Activated CD8-positive, alpha-beta T cell treated with anti-CD3 and anti-CD28 coated beads for 36 hours (primary cell): ENCODE measurements at regions of chr11 and their contacts with region 1.

Region 1: GRCh38 chr11:59158206-59159068 is 13.5 kb upstream of the DTX4 start:
- DNase-seq: peak; percentile 78
- ATAC-seq: peak; percentile 97
- H3K4me3 Mint-ChIP-seq: no peak overlapping the region
- H3K27ac Mint-ChIP-seq: no peak overlapping the region
- H3K4me1 Mint-ChIP-seq: peaks cover 4% of the 10 kb centered on the region
- H3K27me3 Mint-ChIP-seq: peaks cover 10% of the 10 kb centered on the region
- CTCF ChIP-seq: peak; percentile 85

Region 2: DNA sequence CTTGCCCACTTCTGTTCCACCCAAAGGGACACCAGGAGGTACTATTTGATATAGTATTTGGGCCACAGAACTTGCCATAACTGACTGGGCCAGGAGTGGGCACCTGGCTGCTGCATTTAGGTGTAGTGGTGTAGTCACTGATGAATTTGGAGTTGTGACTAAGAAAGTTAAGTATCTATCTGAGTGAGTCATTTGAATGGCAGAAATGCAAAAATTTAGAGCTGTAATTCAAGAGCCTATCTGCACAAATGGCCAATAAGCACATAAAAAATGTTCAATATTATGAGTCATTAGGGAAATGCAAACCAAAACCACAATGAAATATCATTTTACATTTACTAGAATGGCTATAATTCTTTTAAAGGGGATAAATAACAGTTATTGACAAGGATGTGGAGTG is 328.7 kb before region 1 on chr11:
- CTCF ChIA-PET with region 1: no interaction called
- POLR2A ChIA-PET with region 1: no interaction called
- intact Hi-C with region 1: no loop called
- DNase-seq: peak; percentile 1
- ATAC-seq: peak; percentile 53
- H3K4me3 Mint-ChIP-seq: no peak overlapping the region
- H3K27ac Mint-ChIP-seq: no peak overlapping the region
- H3K4me1 Mint-ChIP-seq: no peaks in the 10 kb centered on the region
- H3K27me3 Mint-ChIP-seq: peaks cover 16% of the 10 kb centered on the region
- CTCF ChIP-seq: no peak

Region 3: GRCh38 chr11:58938398-58938797 is 220.0 kb before region 1 on chr11:
- CTCF ChIA-PET with region 1: no interaction called
- POLR2A ChIA-PET with region 1: no interaction called
- intact Hi-C with region 1: no loop called
- DNase-seq: no peak
- ATAC-seq: no peak
- H3K4me3 Mint-ChIP-seq: no peak overlapping the region
- H3K27ac Mint-ChIP-seq: no peak overlapping the region
- H3K4me1 Mint-ChIP-seq: no peaks in the 10 kb centered on the region
- H3K27me3 Mint-ChIP-seq: peaks cover 7% of the 10 kb centered on the region
- CTCF ChIP-seq: no peak

Region 4: GRCh38 chr11:59062602-59063529 is 95.6 kb before region 1 on chr11:
- CTCF ChIA-PET with region 1: interaction called, 29 read pairs
- POLR2A ChIA-PET with region 1: no interaction called
- intact Hi-C with region 1: no loop called
- DNase-seq: no peak
- ATAC-seq: no peak
- H3K4me3 Mint-ChIP-seq: no peak overlapping the region
- H3K27ac Mint-ChIP-seq: no peak overlapping the region
- H3K4me1 Mint-ChIP-seq: peaks cover 3% of the 10 kb centered on the region
- H3K27me3 Mint-ChIP-seq: peaks cover 36% of the 10 kb centered on the region
- CTCF ChIP-seq: no peak

Region 5: GRCh38 chr11:59106363-59107336 is 51.8 kb before region 1 on chr11 and contains the start of gene FAM111B:
- CTCF ChIA-PET with region 1: interaction called, 27 read pairs
- POLR2A ChIA-PET with region 1: interaction called, 5 read pairs
- intact Hi-C with region 1: no loop called
- DNase-seq: peak; percentile 84
- ATAC-seq: peak; percentile 89
- H3K4me3 Mint-ChIP-seq: peak within 1 kb of the TSS; percentile 86
- H3K27ac Mint-ChIP-seq: peak within 1 kb of the TSS; percentile 65
- H3K4me1 Mint-ChIP-seq: peaks cover 30% of the 10 kb centered on the region
- H3K27me3 Mint-ChIP-seq: peaks cover 48% of the 10 kb centered on the region
- CTCF ChIP-seq: no peak
- total RNA-seq, gene FAM111B: 18.2 to 18.3 TPM

Region 6: DNA sequence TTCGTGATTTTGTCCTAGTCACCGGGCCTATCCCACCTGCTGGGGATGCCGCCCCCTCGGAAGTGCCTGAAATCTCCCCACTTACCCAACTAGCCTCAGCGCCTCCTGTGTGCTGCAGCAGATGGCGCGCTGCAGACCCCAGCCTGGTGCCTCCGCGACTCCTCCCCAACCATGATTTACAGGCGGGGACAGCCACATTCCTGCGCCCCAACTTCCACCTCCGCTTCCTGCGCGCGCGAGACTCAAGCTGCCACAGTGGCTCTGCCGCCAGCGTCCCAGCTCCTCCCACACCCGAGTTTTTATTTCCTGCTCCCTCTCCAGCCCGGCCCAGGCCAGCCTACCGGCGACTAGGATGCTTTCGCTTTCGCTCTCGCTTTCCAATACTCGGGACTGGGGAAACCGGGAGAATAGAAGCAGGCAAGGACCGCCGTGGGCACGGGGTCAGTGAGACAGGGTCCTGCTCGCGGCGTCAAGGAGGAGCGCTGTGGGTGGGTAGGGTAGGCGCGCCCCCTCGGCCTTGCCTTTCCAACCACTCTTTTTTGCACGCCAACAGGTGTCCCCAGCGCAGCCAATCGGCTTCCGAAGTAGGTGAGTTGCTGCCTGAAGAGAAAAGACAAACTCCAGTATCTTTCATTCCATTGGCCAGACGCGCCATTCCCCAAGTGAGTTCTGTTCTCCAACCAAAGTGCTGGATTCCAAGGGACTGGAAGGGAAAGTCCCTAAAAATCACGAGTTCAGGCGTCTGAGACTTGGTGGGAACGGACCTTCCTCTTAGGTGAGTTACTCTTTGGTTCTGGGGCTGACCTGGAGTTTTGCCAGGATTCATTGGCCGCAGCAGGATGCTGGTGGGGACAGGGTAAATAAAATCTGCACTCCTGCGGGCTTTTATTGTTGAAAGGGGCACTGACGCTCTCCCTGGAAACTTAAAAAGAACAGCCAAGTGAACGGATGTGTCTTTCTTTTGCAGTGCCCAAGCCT is 15.6 kb before region 1 on chr11 and contains the start of gene FAM111A:
- CTCF ChIA-PET with region 1: interaction called, 143 read pairs
- POLR2A ChIA-PET with region 1: interaction called, 9 read pairs
- intact Hi-C with region 1: no loop called
- DNase-seq: peak; percentile 87
- ATAC-seq: peak; percentile 79
- H3K4me3 Mint-ChIP-seq: peak within 1 kb of the TSS; percentile 93
- H3K27ac Mint-ChIP-seq: peak within 1 kb of the TSS; percentile 93
- H3K4me1 Mint-ChIP-seq: peaks cover 47% of the 10 kb centered on the region
- H3K27me3 Mint-ChIP-seq: no peaks in the 10 kb centered on the region
- CTCF ChIP-seq: no peak
- total RNA-seq, gene FAM111A: 71.8 to 74.5 TPM

Region 7: GRCh38 chr11:59180168-59180776 is 21.8 kb after region 1 on chr11:
- CTCF ChIA-PET with region 1: interaction called, 15 read pairs
- POLR2A ChIA-PET with region 1: no interaction called
- intact Hi-C with region 1: no loop called
- DNase-seq: no peak
- ATAC-seq: no peak
- H3K4me3 Mint-ChIP-seq: no peak overlapping the region
- H3K27ac Mint-ChIP-seq: no peak overlapping the region
- H3K4me1 Mint-ChIP-seq: no peaks in the 10 kb centered on the region
- H3K27me3 Mint-ChIP-seq: no peaks in the 10 kb centered on the region
- CTCF ChIP-seq: no peak

Region 8: DNA sequence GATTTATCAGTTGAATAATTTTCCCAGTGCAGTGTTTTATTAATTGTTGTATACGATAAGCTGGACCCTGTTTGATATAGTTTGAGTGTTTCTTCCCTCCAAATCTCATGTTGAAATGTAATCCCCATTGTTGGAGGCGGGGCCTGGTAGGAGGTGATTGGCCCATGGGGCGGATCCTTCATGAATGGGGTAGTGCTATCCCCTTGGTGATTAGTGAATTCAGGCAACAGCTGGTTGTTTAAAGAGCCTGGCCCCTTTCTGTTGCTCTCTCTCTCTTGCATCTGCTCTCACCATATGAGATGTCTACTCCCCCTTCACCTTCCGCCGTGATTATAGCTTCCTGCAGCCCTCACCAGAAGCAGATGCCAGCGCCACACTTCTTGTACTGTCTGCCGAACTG is 279.3 kb after region 1 on chr11:
- CTCF ChIA-PET with region 1: interaction called, 3 read pairs
- POLR2A ChIA-PET with region 1: no interaction called
- intact Hi-C with region 1: loop called (anchors 5 kb)
- DNase-seq: no peak
- ATAC-seq: no peak
- H3K4me3 Mint-ChIP-seq: no peak overlapping the region
- H3K27ac Mint-ChIP-seq: no peak overlapping the region
- H3K4me1 Mint-ChIP-seq: no peaks in the 10 kb centered on the region
- H3K27me3 Mint-ChIP-seq: peaks cover 3% of the 10 kb centered on the region
- CTCF ChIP-seq: no peak